Naive thymus-derived CD4-positive, alpha-beta T cell (primary cell): ENCODE measurements at regions of chr13 and their contacts with region 1.

Region 1: GRCh38 chr13:27712421-27712820 is 79.9 kb upstream of the GSX1 start:
- DNase-seq: peak in 3 of 9 donors; percentile 24 to 29 (median 28)
- ATAC-seq: no peak
- H3K4me3 ChIP-seq: no peak overlapping the region
- H3K4me3 Mint-ChIP-seq: no peak overlapping the region
- H3K27ac ChIP-seq: no peak overlapping the region
- H3K27ac Mint-ChIP-seq: no peak overlapping the region
- H3K4me1 ChIP-seq: no peaks in the 10 kb centered on the region
- H3K4me1 Mint-ChIP-seq: no peaks in the 10 kb centered on the region
- H3K27me3 ChIP-seq: no peaks in the 10 kb centered on the region
- H3K27me3 Mint-ChIP-seq: peaks cover 13 to 29% (median 16%) of the 10 kb centered on the region in 5 donors

Region 2: GRCh38 chr13:27379694-27380641 is 332.5 kb before region 1 on chr13:
- CTCF ChIA-PET with region 1: no interaction called
- POLR2A ChIA-PET with region 1: no interaction called
- intact Hi-C with region 1: loop called (anchors 1 to 10 kb)
- DNase-seq: peak; percentile 25 to 62 (median 43)
- ATAC-seq: peak; percentile 65
- H3K4me3 ChIP-seq: no peak overlapping the region
- H3K4me3 Mint-ChIP-seq: no peak overlapping the region
- H3K27ac ChIP-seq: no peak overlapping the region
- H3K27ac Mint-ChIP-seq: no peak overlapping the region
- H3K4me1 ChIP-seq: no peaks in the 10 kb centered on the region
- H3K4me1 Mint-ChIP-seq: peaks cover 0 to 10% (median 0%) of the 10 kb centered on the region in 7 donors
- H3K27me3 ChIP-seq: no peaks in the 10 kb centered on the region
- H3K27me3 Mint-ChIP-seq: peaks cover 4 to 9% (median 6%) of the 10 kb centered on the region in 5 donors

Region 3: DNA sequence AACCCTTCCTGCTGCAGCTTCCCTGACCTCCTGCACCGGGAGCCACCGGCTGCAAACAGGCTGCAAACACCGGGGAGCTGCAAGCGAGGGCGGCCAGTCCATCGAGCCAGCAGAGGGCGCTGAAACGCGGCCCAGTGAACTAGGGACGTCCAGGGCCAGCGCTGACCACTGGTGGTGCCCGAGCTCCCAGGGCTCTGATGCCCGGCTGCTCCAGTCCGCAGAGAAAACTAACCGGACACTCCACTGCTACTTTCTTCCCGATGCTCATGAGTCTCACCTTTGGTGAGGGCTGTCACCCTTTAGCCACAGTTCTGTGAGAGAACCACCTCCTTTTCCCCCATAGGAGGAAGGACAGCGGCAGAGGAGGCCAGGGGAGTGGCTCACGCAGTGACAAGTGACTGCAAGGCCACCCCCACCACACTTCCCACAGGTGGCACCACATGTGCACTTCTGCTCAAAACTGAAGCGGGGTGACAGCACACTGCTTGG is 179.2 kb before region 1 on chr13:
- CTCF ChIA-PET with region 1: no interaction called
- POLR2A ChIA-PET with region 1: no interaction called
- intact Hi-C with region 1: loop called in 1 of 2 experiments (anchors 1 kb)
- DNase-seq: peak in 7 of 9 donors; percentile 17 to 51 (median 42)
- ATAC-seq: peak; percentile 83
- H3K4me3 ChIP-seq: no peak overlapping the region
- H3K4me3 Mint-ChIP-seq: peak overlapping the region in 6 of 10 donors; percentile 26 to 52 (median 44)
- H3K27ac ChIP-seq: no peak overlapping the region
- H3K27ac Mint-ChIP-seq: no peak overlapping the region
- H3K4me1 ChIP-seq: peaks cover 0 to 9% of the 10 kb centered on the region in 2 donors
- H3K4me1 Mint-ChIP-seq: peaks cover 0 to 12% (median 10%) of the 10 kb centered on the region in 7 donors
- H3K27me3 ChIP-seq: no peaks in the 10 kb centered on the region
- H3K27me3 Mint-ChIP-seq: peaks cover 0 to 17% (median 5%) of the 10 kb centered on the region in 5 donors

Region 4: GRCh38 chr13:28000567-28000966 is 288.1 kb after region 1 on chr13:
- CTCF ChIA-PET with region 1: no interaction called
- POLR2A ChIA-PET with region 1: no interaction called
- intact Hi-C with region 1: no loop called
- DNase-seq: no peak
- ATAC-seq: peak; percentile 18
- H3K4me3 ChIP-seq: no peak overlapping the region
- H3K4me3 Mint-ChIP-seq: no peak overlapping the region
- H3K27ac ChIP-seq: no peak overlapping the region
- H3K27ac Mint-ChIP-seq: no peak overlapping the region
- H3K4me1 ChIP-seq: no peaks in the 10 kb centered on the region
- H3K4me1 Mint-ChIP-seq: peaks cover 0 to 7% (median 6%) of the 10 kb centered on the region in 7 donors
- H3K27me3 ChIP-seq: no peaks in the 10 kb centered on the region
- H3K27me3 Mint-ChIP-seq: peaks cover 0 to 6% (median 0%) of the 10 kb centered on the region in 5 donors